Testis (tissue), 5 donors: ENCODE measurements at regions of chr15 and their contacts with region 1.

Region 1: DNA sequence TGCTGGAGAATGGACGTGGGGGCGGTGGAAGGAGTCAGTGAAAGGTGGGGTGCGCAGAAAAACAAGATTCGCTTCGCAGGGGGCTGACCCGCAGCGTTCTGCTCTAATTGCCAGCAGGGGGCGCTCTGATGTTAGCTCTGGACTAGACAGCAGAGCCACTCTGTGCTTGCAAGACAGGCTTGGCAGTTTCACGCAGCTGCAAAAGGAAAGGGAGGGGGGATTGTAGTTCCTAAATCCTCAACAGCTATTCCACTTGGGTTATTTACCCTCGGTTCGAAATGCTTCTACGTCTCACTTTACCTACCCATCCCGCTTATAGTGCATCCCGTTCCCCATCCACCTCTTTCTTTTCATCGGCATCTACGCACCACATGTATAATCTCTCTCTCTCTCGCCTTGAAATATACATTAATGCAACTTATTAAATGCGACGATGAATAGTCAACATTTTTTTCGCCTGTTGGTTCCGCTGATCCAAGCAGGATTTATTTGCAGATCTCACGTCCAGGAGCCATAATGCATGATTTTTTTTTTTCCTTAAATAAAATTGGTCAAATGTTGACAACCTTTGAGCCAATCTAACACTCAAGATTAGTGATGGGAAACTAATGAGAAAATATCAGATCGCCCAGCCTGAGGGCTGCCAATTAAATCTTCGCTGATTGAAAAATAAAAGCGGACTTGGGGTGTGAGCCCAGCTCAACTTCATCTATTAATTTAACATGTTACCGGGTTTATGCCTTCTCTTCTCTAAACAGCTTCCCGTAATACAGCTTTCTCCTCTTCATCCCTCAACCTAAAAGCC is 216.4 kb downstream of the MEIS2 start:
- DNase-seq: peak; percentile 96
- H3K4me3 ChIP-seq: peak overlapping the region in 1 of 2 donors; percentile 2
- H3K27ac ChIP-seq: no peak overlapping the region
- H3K4me1 ChIP-seq: no peaks in the 10 kb centered on the region
- H3K27me3 ChIP-seq: no peaks in the 10 kb centered on the region
- CTCF ChIP-seq: peak; percentile 72 to 91 (median 81)
- POLR2A ChIP-seq: no peak

Region 2: DNA sequence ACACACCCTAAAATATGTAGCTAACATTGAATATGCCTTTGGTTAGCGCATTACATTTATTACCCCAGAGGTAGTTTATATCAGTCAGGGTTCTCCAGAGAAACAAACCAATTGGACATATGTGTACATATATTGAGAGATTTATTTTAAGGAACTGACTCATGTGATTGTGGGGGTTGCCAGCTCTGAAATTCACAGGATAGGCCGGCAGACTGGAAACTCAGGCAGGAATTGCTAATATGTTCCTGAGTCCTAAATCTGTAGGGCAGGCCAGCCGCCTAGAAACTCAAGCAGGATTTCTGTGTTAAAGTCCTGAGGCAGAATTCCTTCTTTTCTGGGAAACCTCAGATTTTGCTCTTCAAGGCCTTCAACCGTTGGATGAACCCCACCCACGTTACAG is 114.8 kb before region 1 on chr15:
- intact Hi-C with region 1: no loop called
- DNase-seq: no peak
- H3K4me3 ChIP-seq: no peak overlapping the region
- H3K27ac ChIP-seq: no peak overlapping the region
- H3K4me1 ChIP-seq: no peaks in the 10 kb centered on the region
- H3K27me3 ChIP-seq: no peaks in the 10 kb centered on the region
- CTCF ChIP-seq: no peak
- POLR2A ChIP-seq: no peak

Region 3: DNA sequence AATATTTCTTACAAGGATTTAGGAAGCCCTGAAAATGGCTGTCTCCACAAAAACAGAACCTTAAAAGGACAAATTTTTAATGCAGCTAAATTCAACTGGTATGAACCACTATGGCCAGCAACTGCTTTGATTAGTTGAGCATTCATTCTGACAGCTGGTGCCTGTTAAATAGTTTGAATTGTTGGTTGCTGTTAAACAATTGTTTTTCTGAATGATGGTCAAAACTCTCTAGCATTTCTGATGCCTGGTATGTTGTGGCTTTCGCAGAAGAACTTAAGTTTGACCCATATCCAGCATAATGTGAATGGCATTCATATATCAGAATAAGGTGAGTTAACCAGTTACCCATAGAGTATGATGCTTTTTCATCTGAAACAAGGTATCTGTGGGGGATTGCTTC is 78.0 kb after region 1 on chr15:
- intact Hi-C with region 1: no loop called
- DNase-seq: no peak
- H3K4me3 ChIP-seq: no peak overlapping the region
- H3K27ac ChIP-seq: no peak overlapping the region
- H3K4me1 ChIP-seq: no peaks in the 10 kb centered on the region
- H3K27me3 ChIP-seq: no peaks in the 10 kb centered on the region
- CTCF ChIP-seq: no peak
- POLR2A ChIP-seq: no peak

Region 4: GRCh38 chr15:37106490-37107001 is 222.6 kb after region 1 on chr15:
- intact Hi-C with region 1: loop called (anchors 5 kb)
- DNase-seq: peak; percentile 66
- H3K4me3 ChIP-seq: no peak overlapping the region
- H3K27ac ChIP-seq: no peak overlapping the region
- H3K4me1 ChIP-seq: peaks cover 6% of the 10 kb centered on the region
- H3K27me3 ChIP-seq: no peaks in the 10 kb centered on the region
- CTCF ChIP-seq: no peak
- POLR2A ChIP-seq: no peak